ENCODE measurements at regions of chr12 and their contacts with region 1.

Region 1: DNA sequence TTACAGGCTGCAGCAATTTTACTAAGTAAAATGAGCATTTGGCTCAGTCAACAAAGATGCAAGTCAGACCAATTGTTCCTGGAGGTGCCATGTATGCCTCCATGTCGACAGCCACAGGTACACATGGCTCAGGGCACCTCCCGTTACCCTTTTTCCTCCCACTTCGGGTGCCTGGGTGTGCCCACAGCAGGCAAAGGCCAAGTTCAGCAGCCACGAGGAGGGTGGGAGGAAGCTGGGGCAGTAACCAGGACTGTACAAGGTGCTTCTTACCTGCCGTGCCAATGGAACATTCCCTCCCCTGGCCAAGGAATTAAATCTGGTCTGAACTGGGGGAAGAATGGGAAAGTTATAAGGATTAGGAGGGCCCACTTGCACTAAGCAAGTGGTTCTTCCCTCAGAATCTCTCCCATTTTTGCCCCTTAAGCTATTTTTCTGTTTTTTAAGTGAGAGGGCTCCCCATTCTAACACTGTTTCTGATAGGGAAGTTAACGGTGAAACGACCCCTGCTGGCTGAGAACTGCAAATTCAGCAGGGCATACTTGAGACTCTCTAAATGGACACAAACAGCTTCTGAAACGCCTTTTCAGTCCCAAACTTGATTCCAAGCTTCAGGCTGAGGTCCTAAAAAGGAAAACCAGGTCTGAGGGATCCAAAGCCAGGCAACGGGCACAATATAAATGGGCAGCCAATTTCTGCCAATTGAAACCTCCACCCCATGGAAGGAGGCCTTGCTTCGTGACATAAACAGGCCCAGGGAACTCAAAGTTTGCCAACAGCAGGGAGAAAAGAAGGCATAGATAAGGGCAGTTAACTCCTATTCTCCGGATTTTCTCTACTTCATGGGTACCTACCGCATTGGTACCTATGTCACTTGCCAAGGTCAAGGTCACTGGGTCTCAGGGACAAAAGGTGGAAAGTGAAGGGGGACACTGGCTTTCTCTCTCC is 24.8 kb downstream of the CLECL1 start:
- DNase-seq: no peak
- ATAC-seq: peak; percentile 90
- H3K4me3 ChIP-seq: no peak overlapping the region
- H3K27ac ChIP-seq: peak overlapping the region; percentile 71
- H3K4me1 ChIP-seq: peaks cover 51% of the 10 kb centered on the region
- H3K27me3 ChIP-seq: no peaks in the 10 kb centered on the region
- CTCF ChIP-seq: peak; percentile 72 to 88 (median 77)
- EP300 ChIP-seq: no peak
- POLR2A ChIP-seq: no peak
- RAD21 ChIP-seq: peak; percentile 77

Region 2: GRCh38 chr12:9347328-9348127 is 360.6 kb before region 1 on chr12:
- CTCF ChIA-PET with region 1: no interaction called
- POLR2A ChIA-PET with region 1: no interaction called
- RAD21 ChIA-PET with region 1: no interaction called
- SMC1A ChIA-PET with region 1: no interaction called
- in situ Hi-C with region 1: no loop called
- intact Hi-C with region 1: no loop called
- DNase-seq: no peak
- ATAC-seq: no peak
- H3K4me3 ChIP-seq: no peak overlapping the region
- H3K27ac ChIP-seq: no peak overlapping the region
- H3K4me1 ChIP-seq: peaks cover 3% of the 10 kb centered on the region; the same call in 1 of the 2 replicates
- H3K27me3 ChIP-seq: no peaks in the 10 kb centered on the region
- CTCF ChIP-seq: no peak
- EP300 ChIP-seq: no peak
- POLR2A ChIP-seq: no peak
- RAD21 ChIP-seq: no peak

Region 3: GRCh38 chr12:9364224-9365176 is 343.6 kb before region 1 on chr12:
- CTCF ChIA-PET with region 1: interaction called, 3 read pairs
- POLR2A ChIA-PET with region 1: no interaction called
- RAD21 ChIA-PET with region 1: no interaction called
- SMC1A ChIA-PET with region 1: interaction called, 3 read pairs
- in situ Hi-C with region 1: no loop called
- intact Hi-C with region 1: loop called (anchors 10 kb)
- DNase-seq: peak; percentile 98
- ATAC-seq: peak; percentile 89
- H3K4me3 ChIP-seq: peak overlapping the region; percentile 29; the same call in 1 of the 2 replicates
- H3K27ac ChIP-seq: peak overlapping the region; percentile 88
- H3K4me1 ChIP-seq: peaks cover 42% of the 10 kb centered on the region
- H3K27me3 ChIP-seq: no peaks in the 10 kb centered on the region
- CTCF ChIP-seq: no peak
- EP300 ChIP-seq: peak; percentile 80 to 82
- POLR2A ChIP-seq: peak; percentile 89
- RAD21 ChIP-seq: 0 out of 2 replicates have a peak, but pooled peaks have one; percentile 9

Region 4: GRCh38 chr12:9597365-9597764 is 110.8 kb before region 1 on chr12:
- CTCF ChIA-PET with region 1: no interaction called
- POLR2A ChIA-PET with region 1: no interaction called
- RAD21 ChIA-PET with region 1: no interaction called
- SMC1A ChIA-PET with region 1: no interaction called
- in situ Hi-C with region 1: no loop called
- intact Hi-C with region 1: no loop called
- DNase-seq: no peak
- ATAC-seq: no peak
- H3K4me3 ChIP-seq: no peak overlapping the region
- H3K27ac ChIP-seq: no peak overlapping the region
- H3K4me1 ChIP-seq: no peaks in the 10 kb centered on the region
- H3K27me3 ChIP-seq: no peaks in the 10 kb centered on the region
- CTCF ChIP-seq: no peak
- EP300 ChIP-seq: no peak
- POLR2A ChIP-seq: no peak
- RAD21 ChIP-seq: no peak

Region 5: DNA sequence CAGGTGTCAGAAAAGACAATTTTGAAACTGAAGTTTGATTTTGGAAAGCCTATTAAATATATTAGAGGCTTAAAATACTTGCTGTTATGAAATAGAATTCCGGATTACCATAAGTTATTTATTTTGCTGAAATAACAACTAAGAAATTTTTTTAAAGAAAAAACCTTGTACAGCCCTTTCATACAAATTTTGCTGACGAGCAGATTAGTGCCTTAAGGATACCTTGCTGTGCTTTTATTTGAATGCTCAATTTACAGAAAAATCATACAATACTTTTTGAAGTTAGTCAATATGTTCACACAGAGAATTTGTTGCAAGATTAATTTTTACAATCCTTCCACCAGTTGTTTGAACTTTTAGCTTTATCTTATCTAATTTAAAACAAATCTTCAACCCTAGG is 68.1 kb before region 1 on chr12:
- CTCF ChIA-PET with region 1: interaction called, 159 read pairs
- POLR2A ChIA-PET with region 1: no interaction called
- RAD21 ChIA-PET with region 1: interaction called, 12 read pairs
- SMC1A ChIA-PET with region 1: interaction called, 100 read pairs
- in situ Hi-C with region 1: loop called (anchors 5 kb)
- intact Hi-C with region 1: no loop called
- DNase-seq: no peak
- ATAC-seq: no peak
- H3K4me3 ChIP-seq: no peak overlapping the region
- H3K27ac ChIP-seq: no peak overlapping the region
- H3K4me1 ChIP-seq: peaks cover 20% of the 10 kb centered on the region
- H3K27me3 ChIP-seq: no peaks in the 10 kb centered on the region
- CTCF ChIP-seq: no peak
- EP300 ChIP-seq: no peak
- POLR2A ChIP-seq: no peak
- RAD21 ChIP-seq: no peak

Region 6: DNA sequence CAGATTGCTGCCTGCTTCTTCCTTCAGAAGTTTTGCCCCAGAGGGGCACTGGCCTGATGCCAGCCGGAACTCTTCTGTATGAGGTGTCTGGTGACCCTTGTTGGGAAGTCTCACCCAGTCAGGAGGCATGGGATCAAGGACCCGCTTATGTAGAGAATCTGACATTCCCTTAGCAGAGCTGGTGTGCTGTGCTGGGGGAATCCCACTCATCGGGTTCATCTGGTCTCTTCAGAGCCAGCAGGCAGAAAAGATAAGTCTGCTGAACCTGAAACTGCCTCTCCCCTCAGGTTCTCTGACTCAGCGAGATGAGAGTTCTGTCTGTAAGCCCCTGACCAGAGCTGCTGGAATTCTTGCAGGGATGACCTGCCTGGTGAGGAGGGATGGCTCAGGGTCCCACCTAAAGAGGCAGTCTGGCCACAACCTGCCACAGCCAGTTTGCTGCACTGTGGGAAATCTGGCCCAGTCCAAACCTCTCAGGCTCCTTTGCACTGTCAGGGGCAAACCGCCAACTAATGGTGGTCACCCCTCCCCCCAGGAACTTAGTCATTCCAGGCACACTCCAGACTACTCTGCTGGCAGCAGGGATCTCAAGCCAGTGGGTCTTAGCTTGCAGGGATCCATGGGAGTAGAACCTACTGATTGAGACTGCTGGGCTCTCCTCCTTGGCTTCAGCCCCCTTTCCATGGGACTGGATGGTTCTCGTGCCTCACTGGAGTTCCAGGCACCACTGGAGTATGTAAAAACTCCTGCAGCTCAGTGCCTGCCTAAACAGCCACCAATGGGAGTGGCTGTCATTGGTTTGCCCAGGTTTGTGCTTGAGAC is 34.5 kb before region 1 on chr12:
- CTCF ChIA-PET with region 1: interaction called, 8 read pairs
- POLR2A ChIA-PET with region 1: no interaction called
- RAD21 ChIA-PET with region 1: interaction called, 3 read pairs
- SMC1A ChIA-PET with region 1: interaction called, 9 read pairs
- in situ Hi-C with region 1: no loop called
- intact Hi-C with region 1: loop called (anchors 2 kb)
- DNase-seq: no peak
- ATAC-seq: peak; percentile 41
- H3K4me3 ChIP-seq: peak overlapping the region; percentile 61
- H3K27ac ChIP-seq: peak overlapping the region; percentile 91
- H3K4me1 ChIP-seq: peaks cover 25% of the 10 kb centered on the region
- H3K27me3 ChIP-seq: peaks cover 0 to 2% of the 10 kb centered on the region in 2 experiments; a peak in 1 of 4 replicates
- CTCF ChIP-seq: no peak
- EP300 ChIP-seq: no peak
- POLR2A ChIP-seq: no peak; the same call in 1 of the 2 replicates
- RAD21 ChIP-seq: no peak

Region 7: DNA sequence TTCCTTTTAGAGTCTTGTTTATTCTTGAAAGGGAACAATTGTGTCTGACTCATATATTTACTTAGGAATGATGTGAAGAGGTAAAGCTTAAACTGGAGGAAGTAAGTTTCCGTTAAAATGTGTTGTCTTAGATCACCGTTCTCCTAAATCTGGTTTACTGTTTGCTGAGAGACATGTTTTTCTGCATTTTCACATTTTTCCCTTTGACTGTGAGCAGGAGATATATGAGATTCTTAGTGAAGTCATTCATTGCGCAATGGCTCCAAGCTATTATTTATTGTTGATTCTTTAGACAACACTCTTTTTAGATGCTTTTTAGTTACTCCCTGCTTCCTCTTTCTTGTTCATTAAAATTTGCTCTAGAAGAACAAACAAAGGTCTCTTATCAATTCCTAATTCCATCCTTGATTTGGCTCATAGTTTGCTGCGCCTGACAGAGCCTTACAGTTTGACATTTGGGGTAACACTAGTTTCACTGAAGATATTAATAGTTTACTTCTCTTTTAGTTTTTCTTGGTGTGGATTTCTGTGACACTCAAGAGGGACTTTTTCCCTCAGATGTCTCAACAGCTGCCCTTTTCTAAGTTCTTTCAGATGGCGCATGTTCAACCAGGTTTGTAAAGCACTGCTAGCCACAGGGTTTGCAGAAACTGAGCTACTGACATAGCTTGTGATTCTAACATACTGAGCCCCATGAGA is 13.4 kb after region 1 on chr12:
- CTCF ChIA-PET with region 1: interaction called, 18 read pairs
- POLR2A ChIA-PET with region 1: no interaction called
- RAD21 ChIA-PET with region 1: interaction called, 5 read pairs
- SMC1A ChIA-PET with region 1: interaction called, 11 read pairs
- in situ Hi-C with region 1: no loop called
- intact Hi-C with region 1: no loop called
- DNase-seq: peak; percentile 77
- ATAC-seq: peak; percentile 71
- H3K4me3 ChIP-seq: 0 out of 2 replicates have a peak overlapping the region, but pooled peaks have one; percentile 3
- H3K27ac ChIP-seq: peak overlapping the region; percentile 88
- H3K4me1 ChIP-seq: peaks cover 51% of the 10 kb centered on the region
- H3K27me3 ChIP-seq: no peaks in the 10 kb centered on the region; a peak in 1 of 4 replicates
- CTCF ChIP-seq: no peak
- EP300 ChIP-seq: peak; percentile 29 to 58; a peak in 2 of 4 replicates
- POLR2A ChIP-seq: peak; percentile 41; the same call in 1 of the 2 replicates
- RAD21 ChIP-seq: 0 out of 2 replicates have a peak, but pooled peaks have one; percentile 1

Region 8: DNA sequence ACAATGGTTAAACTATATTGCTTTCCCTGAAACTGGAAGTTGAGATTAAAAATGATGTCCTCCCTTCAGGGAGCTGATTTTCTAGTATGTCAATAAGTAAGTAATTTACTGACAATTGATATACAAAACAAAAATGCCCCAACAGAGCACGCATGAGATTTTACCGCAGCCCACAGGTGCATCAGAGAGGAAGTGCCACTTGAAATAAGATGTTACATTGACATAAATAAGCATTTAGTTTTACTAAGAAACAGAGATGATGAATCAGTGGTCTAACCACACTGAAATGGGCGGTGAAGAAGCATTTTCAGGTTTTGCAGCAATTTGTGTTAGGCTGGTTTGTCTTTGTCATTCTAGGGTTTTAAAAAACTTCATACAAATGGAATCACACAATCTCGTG is 33.6 kb after region 1 on chr12:
- CTCF ChIA-PET with region 1: interaction called, 21 read pairs
- POLR2A ChIA-PET with region 1: no interaction called
- RAD21 ChIA-PET with region 1: interaction called, 7 read pairs
- SMC1A ChIA-PET with region 1: interaction called, 13 read pairs
- in situ Hi-C with region 1: no loop called
- intact Hi-C with region 1: no loop called
- DNase-seq: peak; percentile 89
- ATAC-seq: peak; percentile 82
- H3K4me3 ChIP-seq: peak overlapping the region; percentile 36; the same call in 1 of the 2 replicates
- H3K27ac ChIP-seq: peak overlapping the region; percentile 72
- H3K4me1 ChIP-seq: peaks cover 30% of the 10 kb centered on the region
- H3K27me3 ChIP-seq: no peaks in the 10 kb centered on the region
- CTCF ChIP-seq: no peak
- EP300 ChIP-seq: peak; percentile 96 to 97
- POLR2A ChIP-seq: no peak
- RAD21 ChIP-seq: no peak

Region 9: DNA sequence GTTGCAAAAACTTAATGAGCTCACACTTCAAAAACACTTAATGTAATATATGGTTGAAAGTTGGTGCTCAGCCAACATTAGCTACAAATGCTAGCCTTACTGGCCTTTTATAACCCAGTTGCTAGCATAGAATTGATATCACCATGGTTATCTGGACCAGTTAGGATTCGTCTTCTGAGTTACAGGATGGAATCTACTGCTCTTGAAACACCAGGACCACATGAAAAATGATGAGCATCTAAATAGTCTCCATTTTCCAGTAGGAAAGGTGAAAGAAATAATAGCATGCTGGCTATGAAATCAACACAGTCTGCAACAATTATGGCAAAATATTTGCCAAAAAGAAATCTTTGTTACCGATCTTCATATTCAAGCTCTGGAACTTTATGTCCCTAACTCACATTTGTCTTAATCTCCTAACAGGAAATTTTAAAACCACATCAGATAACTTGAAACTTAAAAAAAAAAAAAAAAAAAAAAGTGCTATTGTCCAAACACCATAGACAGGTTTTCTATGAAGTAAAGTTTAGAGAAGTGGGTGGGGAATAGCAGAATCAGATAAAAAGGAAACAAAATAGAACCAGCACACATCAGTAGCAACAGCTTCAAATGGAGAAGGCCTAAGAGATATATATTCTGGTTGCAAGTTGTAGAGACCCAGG is 65.2 kb after region 1 on chr12:
- CTCF ChIA-PET with region 1: no interaction called
- POLR2A ChIA-PET with region 1: no interaction called
- RAD21 ChIA-PET with region 1: no interaction called
- SMC1A ChIA-PET with region 1: no interaction called
- in situ Hi-C with region 1: no loop called
- intact Hi-C with region 1: no loop called
- DNase-seq: no peak
- ATAC-seq: no peak
- H3K4me3 ChIP-seq: no peak overlapping the region
- H3K27ac ChIP-seq: no peak overlapping the region
- H3K4me1 ChIP-seq: peaks cover 7% of the 10 kb centered on the region; the same call in 1 of the 2 replicates
- H3K27me3 ChIP-seq: no peaks in the 10 kb centered on the region
- CTCF ChIP-seq: no peak
- EP300 ChIP-seq: no peak
- POLR2A ChIP-seq: no peak
- RAD21 ChIP-seq: no peak

Region 10: DNA sequence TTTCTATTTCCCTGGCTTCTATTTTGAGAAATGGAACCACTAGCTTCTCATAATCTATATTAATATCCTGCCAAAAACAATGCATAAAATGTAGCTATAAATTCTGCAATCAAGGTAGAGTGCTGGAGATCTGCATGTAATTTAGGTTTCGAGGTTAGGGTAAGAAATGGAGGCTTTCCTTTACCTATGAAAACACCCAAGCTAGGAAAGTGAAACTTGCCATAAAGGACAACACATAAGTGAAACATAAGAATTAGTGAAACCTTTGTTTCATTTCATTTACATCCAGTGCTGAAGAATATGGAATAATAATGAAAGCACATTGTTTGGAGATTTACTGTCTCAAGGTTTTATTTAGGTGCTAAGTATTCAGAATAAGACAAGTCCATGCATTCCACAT is 214.3 kb after region 1 on chr12:
- CTCF ChIA-PET with region 1: no interaction called
- POLR2A ChIA-PET with region 1: no interaction called
- RAD21 ChIA-PET with region 1: no interaction called
- SMC1A ChIA-PET with region 1: no interaction called
- in situ Hi-C with region 1: no loop called
- intact Hi-C with region 1: no loop called
- DNase-seq: no peak
- ATAC-seq: no peak
- H3K4me3 ChIP-seq: no peak overlapping the region
- H3K27ac ChIP-seq: no peak overlapping the region
- H3K4me1 ChIP-seq: no peaks in the 10 kb centered on the region
- H3K27me3 ChIP-seq: peaks cover 0 to 2% of the 10 kb centered on the region in 2 experiments; a peak in 2 of 4 replicates
- CTCF ChIP-seq: no peak
- EP300 ChIP-seq: no peak
- POLR2A ChIP-seq: no peak
- RAD21 ChIP-seq: no peak

Measured in GM12878 (cell line).